K562 (cell line): ENCODE measurements at regions of chr7 and their contacts with region 1.

Region 1: GRCh38 chr7:134432296-134433152 is 26.4 kb downstream of the AKR1B1 start:
- DNase-seq: peak; percentile 89 to 93 (median 90)
- ATAC-seq: peak; percentile 99
- H3K4me3 ChIP-seq: 0 out of 2 replicates have a peak overlapping the region, but pooled peaks have one; percentile 7
- H3K27ac ChIP-seq: no peak overlapping the region
- H3K4me1 ChIP-seq: peaks cover 4 to 6% of the 10 kb centered on the region in 2 experiments; a peak in 2 of 5 replicates
- H3K27me3 ChIP-seq: peaks cover 2 to 10% of the 10 kb centered on the region in 2 experiments; a peak in 2 of 5 replicates
- CTCF ChIP-seq: peak; percentile 91 to 96 (median 93)
- EP300 ChIP-seq: no peak
- POLR2A ChIP-seq: no peak
- RAD21 ChIP-seq: peak; percentile 98

Region 2: GRCh38 chr7:134478707-134479106 is 46.2 kb after region 1 on chr7:
- CTCF ChIA-PET with region 1: interaction called, 3 read pairs
- POLR2A ChIA-PET with region 1: interaction called, 4 read pairs
- in situ Hi-C with region 1: no loop called
- intact Hi-C with region 1: loop called (anchors 2 kb)
- DNase-seq: no peak
- ATAC-seq: no peak
- H3K4me3 ChIP-seq: no peak overlapping the region
- H3K27ac ChIP-seq: no peak overlapping the region
- H3K4me1 ChIP-seq: no peaks in the 10 kb centered on the region
- H3K27me3 ChIP-seq: no peaks in the 10 kb centered on the region
- CTCF ChIP-seq: peak in 1 of 3 experiments; percentile 53; a peak in 3 of 6 replicates
- EP300 ChIP-seq: no peak
- POLR2A ChIP-seq: no peak
- RAD21 ChIP-seq: peak in 1 of 2 experiments; percentile 47; a peak in 2 of 4 replicates

Region 3: GRCh38 chr7:134547397-134548054 is 115.0 kb after region 1 on chr7:
- CTCF ChIA-PET with region 1: interaction called, 9 read pairs
- POLR2A ChIA-PET with region 1: no interaction called
- in situ Hi-C with region 1: no loop called
- intact Hi-C with region 1: loop called (anchors 1 kb)
- DNase-seq: peak; percentile 77 to 84 (median 80)
- ATAC-seq: peak; percentile 98
- H3K4me3 ChIP-seq: no peak overlapping the region
- H3K27ac ChIP-seq: no peak overlapping the region
- H3K4me1 ChIP-seq: 0 out of 5 replicates have a peak, but pooled peaks cover 0 to 2% of the 10 kb centered on the region in 2 experiments
- H3K27me3 ChIP-seq: peaks cover 34 to 44% of the 10 kb centered on the region in 2 experiments
- CTCF ChIP-seq: peak; percentile 82 to 98 (median 93)
- EP300 ChIP-seq: no peak
- POLR2A ChIP-seq: no peak
- RAD21 ChIP-seq: peak; percentile 35 to 60; a peak in 3 of 4 replicates

Region 4: DNA sequence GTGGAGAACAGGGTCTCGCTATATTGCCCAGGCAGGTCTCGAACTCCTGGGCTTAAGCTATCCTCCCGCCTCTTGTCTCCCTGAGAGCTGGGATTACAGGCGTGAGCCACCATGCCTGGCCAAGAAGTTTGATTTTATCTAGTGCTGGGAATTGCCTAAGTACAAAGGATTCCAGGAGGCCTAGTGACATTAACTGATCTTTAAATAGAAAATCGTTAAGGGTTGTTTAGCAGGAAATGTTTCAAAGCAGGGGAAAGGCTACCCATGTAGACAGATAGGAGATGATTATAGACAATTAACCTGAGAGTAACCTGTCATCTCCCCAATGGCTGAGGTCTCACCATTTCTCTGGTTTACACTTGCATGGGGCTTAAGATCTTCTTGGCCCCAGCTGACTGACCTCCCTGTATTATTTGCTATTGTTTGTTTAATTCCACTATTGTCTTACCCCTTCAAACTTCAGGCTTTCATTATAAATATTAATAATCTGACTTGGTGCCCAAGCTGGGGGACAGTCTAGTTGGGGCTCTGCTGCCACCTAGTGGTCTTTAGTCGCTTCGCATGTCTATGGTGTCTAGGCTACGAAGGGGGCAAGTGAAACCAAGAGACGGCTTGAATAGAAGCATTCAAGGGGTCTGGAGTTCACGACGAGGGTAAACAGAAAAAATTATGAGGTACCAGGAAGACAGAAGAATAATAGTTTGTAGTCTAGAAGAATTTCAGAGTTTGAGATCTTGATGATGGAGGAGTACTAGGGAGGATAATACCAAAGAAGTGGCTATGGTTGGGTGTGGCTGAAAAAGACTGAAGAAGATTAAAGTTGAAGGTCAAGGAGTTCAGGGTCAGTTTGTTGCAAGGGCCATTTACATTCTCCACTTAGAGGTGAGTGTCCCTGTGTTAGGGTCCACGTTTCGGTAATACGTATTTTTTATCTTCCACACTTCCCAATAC is 173.7 kb after region 1 on chr7:
- CTCF ChIA-PET with region 1: interaction called, 32 read pairs
- POLR2A ChIA-PET with region 1: no interaction called
- in situ Hi-C with region 1: no loop called
- intact Hi-C with region 1: loop called (anchors 1 kb)
- DNase-seq: peak; percentile 73 to 87 (median 81)
- ATAC-seq: peak; percentile 98
- H3K4me3 ChIP-seq: no peak overlapping the region
- H3K27ac ChIP-seq: no peak overlapping the region
- H3K4me1 ChIP-seq: no peaks in the 10 kb centered on the region
- H3K27me3 ChIP-seq: peaks cover 9 to 21% of the 10 kb centered on the region in 2 experiments
- CTCF ChIP-seq: peak; percentile 90 to 97 (median 95)
- EP300 ChIP-seq: no peak
- POLR2A ChIP-seq: no peak
- RAD21 ChIP-seq: peak; percentile 83 to 85

Region 5: GRCh38 chr7:134954197-134955082 is 521.9 kb after region 1 on chr7:
- CTCF ChIA-PET with region 1: interaction called, 6 read pairs
- POLR2A ChIA-PET with region 1: no interaction called
- in situ Hi-C with region 1: no loop called
- intact Hi-C with region 1: loop called (anchors 1 kb)
- DNase-seq: peak; percentile 35 to 50 (median 44)
- ATAC-seq: peak; percentile 80
- H3K4me3 ChIP-seq: no peak overlapping the region
- H3K27ac ChIP-seq: no peak overlapping the region
- H3K4me1 ChIP-seq: no peaks in the 10 kb centered on the region
- H3K27me3 ChIP-seq: peaks cover 0 to 15% of the 10 kb centered on the region in 2 experiments; a peak in 2 of 5 replicates
- CTCF ChIP-seq: peak; percentile 50 to 82 (median 64); a peak in 4 of 6 replicates
- EP300 ChIP-seq: no peak
- POLR2A ChIP-seq: no peak
- RAD21 ChIP-seq: peak; percentile 83 to 88